ENCODE measurements at regions of chr18 and their contacts with region 1.

Region 1: DNA sequence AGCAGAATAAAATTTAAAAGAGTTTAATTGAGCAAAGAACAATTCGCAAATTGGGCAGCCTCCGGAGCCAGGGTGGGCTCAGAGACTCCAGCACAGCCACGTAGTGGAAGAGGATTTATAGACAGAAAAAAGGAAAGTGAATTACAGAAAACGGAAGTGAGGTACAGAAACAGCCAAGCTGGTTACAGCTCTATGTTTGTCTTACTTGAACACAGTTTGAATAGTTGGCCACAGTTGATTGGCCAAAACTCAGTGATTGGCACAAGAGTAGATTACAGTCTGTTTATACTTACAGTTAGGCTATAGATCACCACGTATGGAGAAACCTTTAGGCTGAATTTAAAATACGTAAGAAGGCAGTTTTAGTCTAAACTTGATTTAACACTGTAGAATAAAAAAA is 78.8 kb upstream of the NEDD4L start:
- DNase-seq: peak in 1 of 2 donors; percentile 43
- ATAC-seq: peak; percentile 96

Region 2: DNA sequence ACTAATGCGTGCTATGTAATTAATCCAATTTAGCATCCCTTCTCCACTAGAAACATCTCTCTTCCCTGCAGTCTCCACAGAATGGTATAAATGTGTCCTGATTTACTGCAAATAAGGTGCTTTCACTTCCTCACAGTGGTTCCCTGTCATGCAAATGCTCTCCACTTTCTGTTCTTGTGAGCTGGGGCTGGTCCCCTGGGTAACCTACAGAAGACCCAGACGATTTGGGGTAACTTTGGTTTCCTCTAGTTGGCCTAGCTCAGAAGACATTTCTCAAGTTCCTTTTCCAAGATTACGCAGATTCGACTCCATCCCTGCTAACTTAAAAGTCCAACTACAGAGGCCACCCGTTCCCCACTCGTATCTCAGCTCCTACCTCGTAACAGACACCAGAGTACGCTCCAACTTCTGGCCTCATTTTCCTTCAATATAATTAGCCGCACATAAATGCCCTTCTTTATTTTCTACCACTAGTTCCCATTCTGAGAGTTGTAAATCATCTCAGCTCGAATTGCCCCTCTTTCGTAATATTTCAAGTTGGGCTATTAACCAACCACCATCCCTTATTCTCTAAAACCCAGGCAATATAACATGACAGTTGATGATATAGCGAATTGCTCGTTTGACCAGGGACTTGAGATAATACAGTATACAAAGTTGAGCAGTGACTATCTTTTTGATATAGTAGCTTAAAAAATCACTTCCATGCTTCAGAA is 50.0 kb after region 1 on chr18:
- intact Hi-C with region 1: loop called in 1 of 2 experiments (anchors 10 kb)
- DNase-seq: no peak
- ATAC-seq: no peak

Region 3: GRCh38 chr18:58186258-58186948 is 221.2 kb after region 1 on chr18:
- intact Hi-C with region 1: no loop called
- DNase-seq: peak; percentile 32 to 57
- ATAC-seq: peak; percentile 81

Measured in left colon (tissue), 2 donors.